RWPE1 (cell line): ENCODE measurements at regions of chr7 and their contacts with region 1.

Region 1: GRCh38 chr7:80659120-80660055 is 20.9 kb downstream of the CD36 start:
- DNase-seq: peak; percentile 32
- H3K27ac ChIP-seq: no peak overlapping the region
- CTCF ChIP-seq: peak; percentile 86

Region 2: DNA sequence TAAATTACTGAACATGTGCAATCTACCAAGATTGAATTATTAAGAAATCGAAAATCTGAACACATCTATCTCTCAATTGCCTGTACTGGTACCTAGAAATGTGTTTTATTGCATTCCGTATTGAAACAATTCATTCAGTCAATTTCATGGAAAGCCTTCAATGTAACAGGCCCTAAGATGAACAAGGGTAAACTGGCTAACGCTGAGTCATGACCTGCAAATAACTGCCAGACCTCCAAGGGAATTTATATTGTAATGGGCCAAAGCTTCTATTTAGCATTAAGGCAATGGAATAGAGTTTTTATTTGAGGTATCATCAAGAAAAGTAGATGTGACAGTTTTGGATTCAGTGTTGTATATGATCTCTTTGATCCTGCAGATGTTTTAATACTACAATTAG is 70.8 kb before region 1 on chr7:
- CTCF ChIA-PET with region 1: interaction called, 10 read pairs
- POLR2A ChIA-PET with region 1: no interaction called
- DNase-seq: no peak
- H3K27ac ChIP-seq: no peak overlapping the region
- CTCF ChIP-seq: no peak

Region 3: DNA sequence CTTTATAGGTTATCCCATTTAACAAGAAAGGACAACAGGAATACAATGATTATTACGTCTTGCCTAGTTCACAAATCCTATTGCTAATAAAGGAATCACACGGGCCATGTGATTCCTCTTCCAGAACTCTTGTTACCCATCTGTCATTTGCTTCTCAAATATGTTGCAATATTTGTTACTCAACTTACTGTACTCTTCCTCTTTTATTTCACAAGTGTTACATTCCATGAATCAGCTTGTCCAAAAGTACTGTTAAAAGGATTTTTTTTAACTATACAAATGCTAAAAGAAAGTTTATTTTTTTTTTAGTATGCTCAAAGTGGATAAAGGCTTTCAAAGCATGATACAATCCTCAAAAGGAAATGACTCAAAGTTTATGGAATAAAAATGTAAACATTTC is 24.9 kb before region 1 on chr7:
- CTCF ChIA-PET with region 1: no interaction called
- POLR2A ChIA-PET with region 1: no interaction called
- DNase-seq: peak; percentile 48
- H3K27ac ChIP-seq: no peak overlapping the region
- CTCF ChIP-seq: no peak